Lower leg skin (tissue), 4 donors: ENCODE measurements at regions of chr7 and their contacts with region 1.

Region 1: GRCh38 chr7:45259966-45260646 is 102.5 kb downstream of the RAMP3 start:
- DNase-seq: peak; percentile 26 to 92
- H3K4me3 ChIP-seq: no peak overlapping the region
- CTCF ChIP-seq: peak in 1 of 3 donors; percentile 85
- POLR2A ChIP-seq: no peak

Region 2: DNA sequence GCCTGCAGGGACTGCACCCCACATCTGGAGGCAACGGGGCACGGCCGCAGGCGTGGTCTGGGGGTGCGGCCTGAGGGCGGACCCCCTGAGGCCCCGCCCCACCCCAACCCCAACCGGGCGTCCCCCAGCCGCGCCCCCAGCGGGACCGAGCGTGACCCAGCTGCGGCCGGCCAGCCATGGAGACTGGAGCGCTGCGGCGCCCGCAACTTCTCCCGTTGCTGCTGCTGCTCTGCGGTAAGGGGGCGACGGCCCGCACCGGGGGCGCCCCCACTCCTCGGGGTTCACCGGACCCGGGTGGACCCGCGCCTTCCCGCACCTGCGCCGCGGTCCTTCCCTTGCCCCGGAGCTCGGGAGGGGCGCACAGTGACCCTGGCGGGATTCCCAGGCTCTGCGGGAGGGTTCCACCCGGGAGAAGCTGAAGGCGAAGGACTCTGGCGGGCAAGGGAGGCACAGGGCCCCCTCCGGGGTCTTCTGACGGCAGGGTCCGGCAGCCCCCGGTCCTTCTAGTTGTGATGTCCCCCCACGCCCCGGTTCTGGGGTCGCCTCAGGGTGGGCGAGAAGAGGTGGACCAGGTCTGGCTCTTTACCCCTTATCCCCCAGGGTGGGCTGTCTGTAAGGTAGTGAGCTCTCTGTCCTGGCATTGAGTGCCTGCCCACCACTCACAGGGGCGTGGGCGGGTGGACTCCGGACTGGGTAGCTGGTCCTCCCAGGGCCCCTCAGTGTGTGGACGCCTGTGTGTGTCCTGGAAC is 102.3 kb before region 1 on chr7 and contains the start of gene RAMP3:
- intact Hi-C with region 1: loop called (anchors 5 kb)
- DNase-seq: no peak
- H3K4me3 ChIP-seq: no peak within 1 kb of the TSS
- CTCF ChIP-seq: no peak
- POLR2A ChIP-seq: no peak
- total RNA-seq, gene RAMP3: 23.8 to 71.6 (median 35.1) TPM

Region 3: DNA sequence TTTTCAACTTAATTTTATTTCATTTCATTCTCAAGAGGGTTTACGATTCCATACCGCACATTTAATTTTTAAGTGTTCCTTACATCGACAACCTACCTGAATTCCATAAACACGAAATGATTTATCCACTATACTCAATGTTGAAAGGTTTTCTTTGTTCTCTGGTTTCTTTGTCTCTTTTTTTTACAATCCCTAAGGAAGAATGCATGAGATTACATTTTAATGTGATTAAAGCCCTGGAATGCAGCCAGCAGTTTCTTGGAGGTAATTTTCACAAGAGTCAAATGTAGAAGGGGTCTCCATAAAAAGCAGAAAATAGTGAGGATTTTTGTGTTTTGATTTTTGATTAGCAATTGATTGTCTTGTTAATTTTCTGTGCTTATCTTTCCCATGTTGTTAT is 254.8 kb after region 1 on chr7:
- intact Hi-C with region 1: no loop called
- DNase-seq: no peak
- H3K4me3 ChIP-seq: no peak overlapping the region
- CTCF ChIP-seq: no peak
- POLR2A ChIP-seq: no peak